Uterus (tissue), 4 donors: ENCODE measurements at regions of chr1 and their contacts with region 1.

Region 1: DNA sequence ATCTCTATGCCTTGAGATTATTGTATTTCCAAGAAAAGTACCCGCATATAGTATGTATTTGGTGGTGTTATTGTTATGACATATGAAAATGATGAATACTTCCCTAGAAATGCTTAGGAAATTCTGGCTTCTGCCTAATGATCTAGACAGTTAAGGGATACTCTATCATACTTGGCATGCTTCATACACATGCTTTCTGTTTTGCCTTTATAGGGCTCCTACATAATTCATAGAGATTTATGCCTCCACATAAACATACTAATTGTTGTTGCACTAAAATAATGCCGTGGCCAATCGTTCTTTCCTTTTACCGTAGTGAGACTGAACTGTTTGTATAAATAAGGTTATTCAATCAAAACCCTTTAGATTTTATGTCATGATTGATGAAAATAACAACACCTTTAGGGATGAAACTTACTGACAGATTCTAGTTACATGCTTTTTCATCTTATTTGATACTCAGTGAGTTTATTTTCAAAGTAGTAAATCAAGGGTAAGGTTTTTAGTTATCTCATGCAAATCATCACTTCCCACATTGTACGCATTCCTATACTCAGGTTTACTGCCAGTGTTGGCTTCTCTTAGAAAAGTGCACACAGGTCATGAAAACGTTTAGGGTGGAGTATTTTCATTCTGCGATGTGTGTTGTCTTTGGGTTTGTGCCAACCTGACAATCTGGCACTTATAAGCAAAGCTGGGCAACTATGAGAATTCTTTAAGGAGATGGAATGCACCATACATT is 40.5 kb upstream of the SCYL3 start:
- DNase-seq: no peak
- H3K4me3 ChIP-seq: no peak overlapping the region
- H3K27ac ChIP-seq: no peak overlapping the region
- H3K4me1 ChIP-seq: no peaks in the 10 kb centered on the region
- H3K27me3 ChIP-seq: no peaks in the 10 kb centered on the region
- CTCF ChIP-seq: no peak
- POLR2A ChIP-seq: no peak

Region 2: GRCh38 chr1:170881268-170882265 is 947.4 kb after region 1 on chr1:
- intact Hi-C with region 1: loop called (anchors 5 kb)
- DNase-seq: peak in 1 of 2 donors; percentile 13
- H3K4me3 ChIP-seq: peak overlapping the region in 1 of 2 donors; percentile 19
- H3K27ac ChIP-seq: no peak overlapping the region
- H3K4me1 ChIP-seq: no peaks in the 10 kb centered on the region
- H3K27me3 ChIP-seq: no peaks in the 10 kb centered on the region
- CTCF ChIP-seq: peak; percentile 49 to 72 (median 64)
- POLR2A ChIP-seq: no peak